PC-9 (cell line): ENCODE measurements at regions of chr4 and their contacts with region 1.

Region 1: GRCh38 chr4:154578919-154579318 is 11.6 kb downstream of the FGA start:
- DNase-seq: peak in 1 of 2 experiments; percentile 36
- H3K4me3 ChIP-seq: no peak overlapping the region
- H3K27ac ChIP-seq: no peak overlapping the region
- H3K4me1 ChIP-seq: no peaks in the 10 kb centered on the region
- H3K27me3 ChIP-seq: no peaks in the 10 kb centered on the region
- CTCF ChIP-seq: no peak

Region 2: DNA sequence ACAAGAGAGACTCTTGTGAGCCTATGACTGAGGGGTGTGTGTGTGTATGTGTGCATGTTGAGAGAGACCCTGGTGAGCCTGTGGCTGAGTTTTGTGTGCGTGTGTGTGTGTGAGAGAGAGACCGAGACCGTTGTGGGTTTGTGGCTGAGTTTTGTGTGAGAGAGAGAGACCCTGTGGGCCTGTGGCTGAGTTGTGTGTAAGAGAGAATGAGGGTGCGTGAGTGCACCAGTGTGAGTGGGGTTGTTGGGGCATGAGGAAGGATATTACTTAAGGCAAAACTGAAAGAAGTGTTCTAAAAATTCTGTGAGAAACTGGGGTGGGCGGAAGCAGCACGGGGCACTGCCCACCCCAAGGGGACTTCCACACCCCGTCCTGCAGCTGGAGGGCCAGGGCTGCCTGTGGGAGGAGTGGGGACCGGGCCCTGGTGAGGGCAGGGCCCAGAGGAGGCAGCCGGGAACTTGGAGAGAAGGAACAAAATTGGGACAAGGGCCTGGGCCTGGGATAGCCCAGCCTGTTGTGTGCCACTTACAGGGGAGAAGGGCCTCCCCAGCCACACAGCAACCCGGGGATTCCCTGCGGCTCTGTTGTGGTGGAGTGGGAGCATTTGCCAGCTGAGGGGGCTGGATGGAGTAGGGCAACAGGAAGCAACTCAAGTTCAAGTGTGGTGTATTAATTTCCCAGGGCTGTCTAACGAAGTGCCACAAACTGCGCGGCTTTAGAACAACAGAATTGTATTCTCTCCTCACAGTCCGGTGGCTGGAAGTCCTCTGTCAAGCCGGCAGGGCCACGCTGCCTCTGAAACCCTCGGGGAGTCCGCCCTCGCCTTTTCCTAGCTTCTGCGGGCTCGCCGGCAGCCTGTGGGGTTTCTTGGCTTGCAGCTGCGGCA is 1090.7 kb before region 1 on chr4:
- CTCF ChIA-PET with region 1: no interaction called
- POLR2A ChIA-PET with region 1: no interaction called
- intact Hi-C with region 1: no loop called
- DNase-seq: no peak
- H3K4me3 ChIP-seq: no peak overlapping the region
- H3K27ac ChIP-seq: no peak overlapping the region
- H3K4me1 ChIP-seq: peaks cover 36% of the 10 kb centered on the region
- H3K27me3 ChIP-seq: no peaks in the 10 kb centered on the region
- CTCF ChIP-seq: no peak

Region 3: GRCh38 chr4:154332681-154333421 is 246.1 kb before region 1 on chr4:
- CTCF ChIA-PET with region 1: no interaction called
- POLR2A ChIA-PET with region 1: no interaction called
- intact Hi-C with region 1: no loop called
- DNase-seq: no peak
- H3K4me3 ChIP-seq: no peak overlapping the region
- H3K27ac ChIP-seq: no peak overlapping the region
- H3K4me1 ChIP-seq: no peaks in the 10 kb centered on the region
- H3K27me3 ChIP-seq: no peaks in the 10 kb centered on the region
- CTCF ChIP-seq: no peak

Region 4: DNA sequence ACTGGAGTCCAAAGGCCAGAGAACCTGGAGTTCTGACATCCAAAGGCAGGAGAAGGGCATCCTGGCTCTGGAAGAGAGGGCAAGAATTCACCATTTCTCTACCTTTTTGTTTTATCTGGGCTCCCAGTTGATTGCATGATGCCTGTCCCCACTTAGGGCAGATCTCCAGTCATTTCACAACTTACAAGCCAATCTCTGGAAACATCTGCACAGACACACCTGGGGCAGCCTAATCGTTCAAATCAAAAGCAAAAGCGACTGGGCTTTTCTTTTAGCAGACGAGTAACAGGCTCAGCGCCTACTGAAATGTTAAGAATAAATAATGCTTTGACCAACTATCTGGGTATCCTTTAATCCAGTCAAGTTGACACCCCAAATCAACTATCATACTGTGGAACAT is 493.5 kb after region 1 on chr4:
- CTCF ChIA-PET with region 1: no interaction called
- POLR2A ChIA-PET with region 1: interaction called, 13 read pairs
- intact Hi-C with region 1: no loop called
- DNase-seq: no peak
- H3K4me3 ChIP-seq: no peak overlapping the region
- H3K27ac ChIP-seq: no peak overlapping the region
- H3K4me1 ChIP-seq: no peaks in the 10 kb centered on the region
- H3K27me3 ChIP-seq: no peaks in the 10 kb centered on the region
- CTCF ChIP-seq: no peak